Right ventricle myocardium inferior (tissue), 1 donor: ENCODE measurements at regions of chr1 and their contacts with region 1.

Region 1: GRCh38 chr1:150578965-150579798 is at the start of gene MCL1:
- DNase-seq: peak; percentile 97
- ATAC-seq: peak; percentile 95
- total RNA-seq, gene MCL1: 99.7 TPM

Region 2: DNA sequence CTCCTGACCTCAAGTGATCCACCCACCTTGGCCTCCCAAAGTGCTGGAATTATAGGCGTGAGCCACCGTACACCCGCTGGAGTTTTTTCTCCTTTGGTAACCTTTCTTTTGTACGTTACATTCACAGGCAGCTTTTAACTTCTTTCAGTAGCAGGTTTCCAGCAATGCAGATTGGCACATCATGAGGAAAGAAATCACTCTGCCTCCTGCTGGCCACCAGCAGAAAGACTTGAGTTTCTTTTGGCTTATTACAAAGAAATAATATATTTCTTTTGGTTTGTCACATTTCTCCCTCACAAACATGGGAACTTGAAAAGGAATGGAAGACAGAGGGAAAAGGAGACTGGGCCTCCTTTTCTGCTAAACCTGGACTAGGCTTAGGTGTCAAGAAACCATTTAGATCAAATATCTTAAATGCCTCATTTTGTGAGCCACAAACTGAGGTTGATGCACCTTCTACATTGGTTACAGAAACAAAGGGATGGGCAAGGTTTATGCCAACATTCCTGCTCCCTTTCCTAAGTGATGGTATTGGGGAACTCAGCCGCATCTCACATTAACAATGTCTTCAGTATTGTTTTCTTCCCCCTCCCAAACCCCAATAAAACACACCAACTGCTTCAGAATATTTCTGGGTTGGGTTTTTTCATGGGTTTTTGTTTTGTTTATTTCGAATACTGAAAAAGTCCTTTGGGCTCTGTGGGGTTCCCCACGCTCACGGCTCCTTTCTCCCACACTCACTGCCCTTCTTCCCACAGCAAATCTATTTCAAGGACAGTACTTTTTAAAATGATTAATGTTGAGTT is 42.5 kb after region 1 on chr1:
- intact Hi-C with region 1: loop called (anchors 2 kb)
- DNase-seq: no peak
- ATAC-seq: no peak